Colonic mucosa (tissue), 4 donors: ENCODE measurements at regions of chr10 and their contacts with region 1.

Region 1: DNA sequence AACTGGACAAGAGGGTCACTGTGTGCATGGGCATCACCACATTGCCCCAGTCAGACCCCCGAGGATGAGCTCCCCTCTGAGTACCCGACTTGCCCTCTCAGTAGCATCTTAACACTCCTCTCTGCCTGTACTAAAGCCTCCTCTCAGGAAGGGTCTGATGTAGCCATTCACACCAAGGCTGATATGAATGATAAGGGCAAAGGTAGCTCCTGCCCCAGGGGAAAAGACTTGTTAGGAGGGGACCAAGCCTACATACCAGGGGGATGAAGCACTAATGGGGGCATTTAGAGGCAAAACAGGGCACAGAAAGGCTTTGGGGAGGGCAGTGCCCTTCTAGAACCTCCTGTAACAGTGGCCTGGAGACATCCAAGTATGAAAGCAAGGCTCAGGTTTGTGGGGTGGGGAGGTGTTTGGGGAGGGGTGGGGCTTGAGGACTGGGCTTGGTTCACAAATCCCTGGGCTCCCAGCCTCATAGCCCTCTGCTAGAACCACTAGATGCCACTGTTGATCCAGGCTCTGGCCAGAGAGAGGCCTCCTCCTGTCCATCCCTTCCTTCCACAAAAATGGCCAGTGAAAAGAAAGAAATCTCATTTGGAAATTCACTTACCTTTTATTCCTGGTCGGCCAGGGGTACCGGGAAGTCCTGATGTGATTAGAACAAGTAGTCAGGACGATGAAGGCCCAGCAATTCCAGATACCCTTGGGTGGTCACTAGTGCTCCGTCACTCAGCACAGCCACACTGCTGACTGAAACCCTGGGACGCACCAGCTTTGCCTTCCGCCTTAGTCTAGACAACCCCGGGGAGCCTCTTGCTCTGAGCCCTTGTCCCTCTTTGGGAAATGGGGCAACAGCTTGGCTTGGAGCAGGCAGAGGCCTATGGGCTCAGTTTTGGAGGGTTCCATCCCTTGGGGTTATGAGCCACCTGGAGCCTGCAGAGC is 40.3 kb downstream of the COL17A1 start:
- DNase-seq: peak; percentile 35
- H3K4me3 ChIP-seq: no peak overlapping the region
- H3K27ac ChIP-seq: no peak overlapping the region
- H3K4me1 ChIP-seq: peaks cover 6% of the 10 kb centered on the region
- H3K27me3 ChIP-seq: no peaks in the 10 kb centered on the region
- CTCF ChIP-seq: peak; percentile 29

Region 2: GRCh38 chr10:104121520-104122224 is 76.3 kb after region 1 on chr10 and contains the start of gene SFR1:
- intact Hi-C with region 1: loop called (anchors 10 kb)
- DNase-seq: peak; percentile 99
- H3K4me3 ChIP-seq: peak within 1 kb of the TSS; percentile 66
- H3K27ac ChIP-seq: peak within 1 kb of the TSS; percentile 100
- H3K4me1 ChIP-seq: no peaks in the 10 kb centered on the region
- H3K27me3 ChIP-seq: no peaks in the 10 kb centered on the region
- CTCF ChIP-seq: peak; percentile 39
- total RNA-seq, gene SFR1: 6.8 to 8.0 TPM

Region 3: GRCh38 chr10:104218751-104219150 is 173.3 kb after region 1 on chr10:
- intact Hi-C with region 1: loop called (anchors 5 kb)
- DNase-seq: no peak
- H3K4me3 ChIP-seq: no peak overlapping the region
- H3K27ac ChIP-seq: no peak overlapping the region
- H3K4me1 ChIP-seq: no peaks in the 10 kb centered on the region
- H3K27me3 ChIP-seq: no peaks in the 10 kb centered on the region
- CTCF ChIP-seq: no peak